Aorta (tissue), 5 donors: ENCODE measurements at regions of chr2 and their contacts with region 1.

Region 1: GRCh38 chr2:67840460-67841068 is 222.2 kb downstream of the C1D start:
- DNase-seq: peak; percentile 71 to 87
- ATAC-seq: peak; percentile 90
- H3K4me3 ChIP-seq: no peak overlapping the region
- H3K27ac ChIP-seq: no peak overlapping the region
- H3K4me1 ChIP-seq: peaks cover 0 to 1% of the 10 kb centered on the region in 2 donors
- H3K27me3 ChIP-seq: no peaks in the 10 kb centered on the region

Region 2: GRCh38 chr2:66434679-66435548 is 1405.7 kb before region 1 on chr2 and contains the start of gene MEIS1:
- intact Hi-C with region 1: loop called in 1 of 2 experiments (anchors 5 kb)
- DNase-seq: peak; percentile 93 to 94
- ATAC-seq: peak; percentile 93
- H3K4me3 ChIP-seq: peak within 1 kb of the TSS; percentile 91 to 95
- H3K27ac ChIP-seq: peak within 1 kb of the TSS; percentile 64 to 87
- H3K4me1 ChIP-seq: no peaks in the 10 kb centered on the region
- H3K27me3 ChIP-seq: no peaks in the 10 kb centered on the region
- total RNA-seq, gene MEIS1: 35.4 to 76.6 TPM

Region 3: GRCh38 chr2:66839551-66840320 is 1000.8 kb before region 1 on chr2:
- intact Hi-C with region 1: loop called in 1 of 2 experiments (anchors 10 kb)
- DNase-seq: no peak
- ATAC-seq: peak; percentile 54
- H3K4me3 ChIP-seq: no peak overlapping the region
- H3K27ac ChIP-seq: peak overlapping the region; percentile 83 to 90
- H3K4me1 ChIP-seq: peaks cover 0 to 2% of the 10 kb centered on the region in 2 donors
- H3K27me3 ChIP-seq: no peaks in the 10 kb centered on the region

Region 4: DNA sequence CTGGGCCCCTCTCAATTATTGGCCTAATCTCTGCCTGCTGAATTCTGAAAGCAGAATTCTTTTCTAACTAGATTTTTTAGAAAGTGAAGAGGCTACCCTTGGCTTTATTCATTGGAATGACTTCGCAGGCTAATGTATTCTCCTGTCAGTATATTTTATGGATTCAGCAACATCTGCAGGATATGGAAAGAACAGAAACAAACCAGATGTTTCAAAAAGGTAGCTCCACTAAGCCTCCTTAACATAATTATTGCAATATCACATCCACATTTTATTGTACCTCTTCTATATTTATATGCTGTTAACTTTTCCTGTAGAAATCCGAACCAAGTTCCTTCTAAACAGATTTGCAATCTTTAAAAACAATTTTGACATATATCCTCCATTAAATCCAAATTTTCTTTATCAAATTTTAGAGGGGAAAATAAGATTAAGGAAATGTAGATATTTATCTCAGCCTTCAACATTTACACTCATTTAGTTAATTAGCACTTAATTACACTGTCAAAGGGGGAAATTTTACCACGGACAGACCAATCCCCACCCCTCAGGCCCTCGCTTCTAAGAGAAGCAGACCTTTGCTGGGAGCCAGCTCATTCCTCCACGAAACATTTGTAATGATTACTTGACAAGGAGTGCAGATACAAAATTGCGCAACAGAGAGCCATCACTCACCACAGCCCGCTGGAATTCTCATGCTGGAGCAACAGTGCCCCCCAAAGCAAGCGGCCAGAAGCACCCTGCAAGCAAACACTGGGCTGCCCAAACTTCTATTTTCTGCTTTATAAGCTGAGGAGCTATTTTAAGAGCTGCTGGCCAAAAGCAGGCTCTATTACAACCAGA is 190.1 kb before region 1 on chr2:
- intact Hi-C with region 1: loop called in 1 of 2 experiments (anchors 5 kb)
- DNase-seq: peak; percentile 88 to 89
- ATAC-seq: peak; percentile 94
- H3K4me3 ChIP-seq: no peak overlapping the region
- H3K27ac ChIP-seq: no peak overlapping the region
- H3K4me1 ChIP-seq: peaks cover 0 to 1% of the 10 kb centered on the region in 2 donors
- H3K27me3 ChIP-seq: no peaks in the 10 kb centered on the region

Region 5: GRCh38 chr2:67782443-67782842 is 58.1 kb before region 1 on chr2:
- intact Hi-C with region 1: no loop called
- DNase-seq: no peak
- ATAC-seq: no peak
- H3K4me3 ChIP-seq: no peak overlapping the region
- H3K27ac ChIP-seq: no peak overlapping the region
- H3K4me1 ChIP-seq: peaks cover 0 to 3% of the 10 kb centered on the region in 2 donors
- H3K27me3 ChIP-seq: no peaks in the 10 kb centered on the region

Region 6: GRCh38 chr2:67938053-67938452 is 97.5 kb after region 1 on chr2:
- intact Hi-C with region 1: no loop called
- DNase-seq: no peak
- ATAC-seq: no peak
- H3K4me3 ChIP-seq: no peak overlapping the region
- H3K27ac ChIP-seq: peak overlapping the region in 1 of 2 donors; percentile 65
- H3K4me1 ChIP-seq: no peaks in the 10 kb centered on the region
- H3K27me3 ChIP-seq: no peaks in the 10 kb centered on the region

Region 7: GRCh38 chr2:68031542-68032160 is 191.1 kb after region 1 on chr2:
- intact Hi-C with region 1: loop called (anchors 2 to 5 kb)
- DNase-seq: no peak
- ATAC-seq: peak; percentile 64
- H3K4me3 ChIP-seq: no peak overlapping the region
- H3K27ac ChIP-seq: no peak overlapping the region
- H3K4me1 ChIP-seq: no peaks in the 10 kb centered on the region
- H3K27me3 ChIP-seq: no peaks in the 10 kb centered on the region